Right cardiac atrium (tissue), 5 donors: ENCODE measurements at regions of chr1 and their contacts with region 1.

Region 1: DNA sequence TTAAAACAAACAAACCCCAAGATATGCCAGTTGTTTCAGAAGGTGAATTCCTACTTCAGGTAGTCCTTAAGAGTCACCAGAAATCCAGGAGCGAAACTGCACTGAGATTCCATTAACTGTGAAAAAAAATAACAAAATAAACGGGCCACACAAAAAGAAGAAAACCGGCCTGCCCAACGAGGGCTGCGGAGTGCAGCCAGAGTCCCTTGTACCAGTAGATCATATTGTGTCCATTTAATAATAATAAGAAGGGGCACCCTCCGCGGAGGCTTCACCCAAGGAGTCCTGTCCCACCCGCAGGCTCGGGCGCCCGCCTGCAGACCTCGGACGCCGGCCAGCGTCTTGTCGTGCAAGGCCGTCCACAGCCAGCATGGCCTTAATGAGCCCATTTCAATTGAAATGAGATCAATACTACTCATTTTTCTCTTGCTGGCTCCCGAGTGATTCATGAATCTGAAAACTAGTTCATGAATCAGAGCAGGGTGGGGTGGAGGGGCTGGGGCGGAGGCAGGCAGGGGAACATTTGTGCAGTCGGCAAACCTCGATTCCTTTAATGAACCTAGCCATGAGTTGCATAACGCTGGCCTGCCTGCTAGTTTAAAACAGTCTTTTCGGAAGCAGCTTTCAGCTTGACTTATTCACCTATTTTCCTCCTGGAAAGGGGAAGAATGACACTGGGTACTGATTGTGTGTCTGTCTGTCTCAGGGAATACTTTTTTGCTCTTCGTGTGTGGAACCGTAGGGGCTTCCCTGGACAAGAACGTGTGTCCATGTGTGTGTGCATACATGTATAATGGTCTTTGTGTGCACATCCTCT is 113.1 kb upstream of the IRF2BP2 start:
- DNase-seq: peak; percentile 82 to 88 (median 82)
- ATAC-seq: peak; percentile 23 to 49
- H3K4me3 ChIP-seq: no peak overlapping the region
- H3K27ac ChIP-seq: peak overlapping the region; percentile 100
- H3K4me1 ChIP-seq: peaks cover 46% of the 10 kb centered on the region
- H3K27me3 ChIP-seq: no peaks in the 10 kb centered on the region

Region 2: DNA sequence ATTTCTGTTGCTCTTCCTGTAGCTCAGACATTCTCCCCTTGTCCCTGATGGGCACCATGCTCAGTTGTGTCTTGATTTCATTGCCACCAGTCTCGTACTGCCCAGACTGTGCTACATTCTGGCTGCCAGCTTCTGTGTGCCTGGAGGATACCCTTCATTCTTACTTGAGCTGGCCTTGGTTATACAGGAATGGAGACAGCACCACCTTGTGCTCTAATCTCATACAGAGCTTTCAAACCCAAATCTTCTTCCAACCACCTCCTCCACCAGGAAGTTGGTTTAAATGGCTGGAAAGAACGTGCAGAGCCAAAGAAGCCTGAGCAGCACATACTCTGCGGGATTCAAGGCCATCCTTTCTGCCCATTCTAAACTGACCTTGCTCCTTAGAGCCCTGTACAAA is 653.3 kb before region 1 on chr1:
- intact Hi-C with region 1: no loop called
- DNase-seq: no peak
- ATAC-seq: no peak
- H3K4me3 ChIP-seq: no peak overlapping the region
- H3K27ac ChIP-seq: no peak overlapping the region
- H3K4me1 ChIP-seq: no peaks in the 10 kb centered on the region
- H3K27me3 ChIP-seq: no peaks in the 10 kb centered on the region

Region 3: GRCh38 chr1:234499119-234499942 is 223.8 kb before region 1 on chr1:
- intact Hi-C with region 1: loop called in 2 of 4 experiments (anchors 5 kb)
- DNase-seq: peak; percentile 90 to 97 (median 97)
- ATAC-seq: peak; percentile 95 to 96
- H3K4me3 ChIP-seq: peak overlapping the region; percentile 6
- H3K27ac ChIP-seq: peak overlapping the region; percentile 92
- H3K4me1 ChIP-seq: peaks cover 10% of the 10 kb centered on the region
- H3K27me3 ChIP-seq: no peaks in the 10 kb centered on the region

Region 4: DNA sequence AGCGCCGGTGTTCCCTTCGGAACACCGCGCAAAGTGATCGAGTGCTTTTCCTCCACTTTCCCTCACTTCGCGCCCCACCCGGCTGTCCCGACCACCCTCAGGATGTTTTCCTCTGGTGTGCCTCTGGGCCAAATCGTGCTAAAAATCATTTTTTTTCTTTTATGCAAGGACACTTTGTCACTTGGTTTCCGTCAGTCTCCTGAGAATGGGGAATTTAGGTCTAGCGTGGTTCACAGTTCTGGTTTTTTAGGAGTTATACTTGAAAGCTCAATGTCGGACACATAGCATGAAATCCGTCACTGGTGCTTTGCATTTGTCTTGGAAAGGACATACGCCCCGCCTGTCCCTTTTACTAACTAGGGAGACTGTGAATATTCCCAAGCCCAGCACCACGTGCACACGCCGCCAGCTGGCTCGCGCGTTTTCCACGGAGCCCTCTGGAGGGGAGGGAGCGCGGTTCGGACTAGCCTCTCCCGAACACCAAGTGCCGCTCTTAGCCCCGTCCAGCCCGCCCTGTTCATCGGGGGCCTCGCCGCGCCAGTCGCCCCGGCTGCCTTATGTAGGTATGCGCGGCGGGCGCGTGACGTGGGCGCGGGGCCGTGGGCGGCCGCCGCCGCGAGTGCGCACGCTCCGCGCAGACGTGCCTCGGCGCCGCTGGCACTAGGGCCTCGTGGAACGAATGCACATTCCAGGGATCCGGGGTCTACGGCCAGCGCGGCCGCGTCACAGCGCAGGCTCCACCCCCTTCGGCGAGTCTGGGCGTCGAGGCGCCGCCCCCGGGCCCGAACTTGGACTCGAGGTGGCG is 112.6 kb before region 1 on chr1:
- intact Hi-C with region 1: loop called (anchors 1 to 5 kb)
- DNase-seq: peak; percentile 98 to 99 (median 99)
- ATAC-seq: peak; percentile 81 to 85
- H3K4me3 ChIP-seq: peak overlapping the region; percentile 71
- H3K27ac ChIP-seq: peak overlapping the region; percentile 99
- H3K4me1 ChIP-seq: peaks cover 4% of the 10 kb centered on the region
- H3K27me3 ChIP-seq: no peaks in the 10 kb centered on the region

Region 5: DNA sequence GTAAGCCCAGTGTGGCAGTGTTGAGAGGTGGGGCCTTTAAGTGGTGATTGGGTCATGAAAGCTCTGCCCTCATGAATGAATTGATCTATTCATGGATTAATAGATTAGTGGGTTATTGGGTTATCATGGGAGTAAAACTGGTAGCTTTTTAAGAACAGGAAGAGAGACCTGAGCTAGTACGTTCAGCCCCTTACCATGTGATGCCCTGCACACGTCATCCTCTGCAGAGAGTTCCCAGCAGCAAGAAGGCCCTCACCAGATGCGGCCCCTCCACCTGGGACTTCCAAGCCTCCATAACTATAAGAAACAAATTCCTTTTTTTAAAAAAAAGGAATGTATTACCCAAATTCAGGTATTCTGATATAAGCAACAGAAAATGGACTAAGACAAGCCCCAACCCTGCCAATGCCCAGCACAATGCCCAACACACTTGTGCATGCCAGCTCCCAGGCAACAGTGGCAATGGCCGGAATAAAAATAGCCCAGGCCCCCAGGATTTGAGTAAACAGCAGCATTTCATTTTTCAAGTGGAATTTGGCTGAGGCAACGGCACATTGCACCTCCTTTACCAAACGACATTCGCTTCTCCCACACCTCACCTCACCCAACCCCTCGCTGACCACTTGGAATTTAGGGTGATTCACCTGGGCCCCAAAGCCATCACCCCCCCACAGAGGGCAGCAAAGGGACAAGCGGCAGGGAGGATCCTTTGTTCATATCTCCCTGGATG is 189.6 kb after region 1 on chr1:
- intact Hi-C with region 1: loop called in 3 of 4 experiments (anchors 5 to 10 kb)
- DNase-seq: no peak
- ATAC-seq: peak; percentile 9 to 12
- H3K4me3 ChIP-seq: no peak overlapping the region
- H3K27ac ChIP-seq: peak overlapping the region; percentile 82
- H3K4me1 ChIP-seq: peaks cover 17% of the 10 kb centered on the region
- H3K27me3 ChIP-seq: no peaks in the 10 kb centered on the region

Region 6: GRCh38 chr1:234978397-234979295 is 255.5 kb after region 1 on chr1:
- intact Hi-C with region 1: loop called in 3 of 4 experiments (anchors 5 to 10 kb)
- DNase-seq: peak in 1 of 3 donors; percentile 77
- ATAC-seq: peak in 1 of 2 donors; percentile 24
- H3K4me3 ChIP-seq: no peak overlapping the region
- H3K27ac ChIP-seq: peak overlapping the region; percentile 98
- H3K4me1 ChIP-seq: peaks cover 39% of the 10 kb centered on the region
- H3K27me3 ChIP-seq: no peaks in the 10 kb centered on the region

Region 7: DNA sequence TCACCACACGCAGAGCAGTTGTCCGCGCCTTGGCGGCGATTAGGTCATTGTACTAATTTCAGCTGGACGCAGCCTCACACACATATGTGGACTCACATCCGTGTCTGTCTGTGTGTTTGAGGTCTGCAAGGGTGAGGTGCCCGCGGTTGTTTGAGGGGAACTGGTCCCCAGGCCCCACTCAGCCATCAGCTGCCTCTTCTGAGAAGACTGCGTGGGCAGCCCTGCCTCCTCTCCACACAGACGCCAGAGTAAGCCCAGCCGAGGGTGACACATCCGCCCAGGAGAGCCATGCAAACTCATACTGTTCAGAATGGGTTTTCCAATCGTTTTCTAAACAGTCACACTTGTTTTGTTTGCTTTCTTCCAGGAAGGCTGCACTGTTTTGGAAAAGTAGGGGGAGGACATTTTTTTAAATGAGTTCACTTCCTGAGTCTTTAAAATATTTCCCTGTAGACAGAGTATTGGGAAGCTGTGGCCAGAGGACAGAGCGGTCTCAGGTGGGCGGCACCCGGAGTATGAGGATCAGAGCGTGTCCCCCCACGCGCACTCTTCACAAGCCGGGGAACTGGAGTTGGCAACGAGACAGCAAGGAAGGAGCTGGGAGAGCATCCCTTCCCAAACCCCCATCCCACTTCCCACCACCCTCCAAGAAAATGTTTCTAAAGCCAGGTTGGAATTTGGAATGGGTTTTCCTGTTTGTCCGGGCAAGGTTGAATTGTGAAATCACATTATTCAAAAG is 352.2 kb after region 1 on chr1:
- intact Hi-C with region 1: loop called in 3 of 4 experiments (anchors 5 kb)
- DNase-seq: peak; percentile 79 to 89 (median 89)
- ATAC-seq: peak; percentile 77 to 86
- H3K4me3 ChIP-seq: no peak overlapping the region
- H3K27ac ChIP-seq: peak overlapping the region; percentile 100
- H3K4me1 ChIP-seq: peaks cover 32% of the 10 kb centered on the region
- H3K27me3 ChIP-seq: no peaks in the 10 kb centered on the region